ENCODE measurements at regions of chr10 and their contacts with region 1.

Region 1: DNA sequence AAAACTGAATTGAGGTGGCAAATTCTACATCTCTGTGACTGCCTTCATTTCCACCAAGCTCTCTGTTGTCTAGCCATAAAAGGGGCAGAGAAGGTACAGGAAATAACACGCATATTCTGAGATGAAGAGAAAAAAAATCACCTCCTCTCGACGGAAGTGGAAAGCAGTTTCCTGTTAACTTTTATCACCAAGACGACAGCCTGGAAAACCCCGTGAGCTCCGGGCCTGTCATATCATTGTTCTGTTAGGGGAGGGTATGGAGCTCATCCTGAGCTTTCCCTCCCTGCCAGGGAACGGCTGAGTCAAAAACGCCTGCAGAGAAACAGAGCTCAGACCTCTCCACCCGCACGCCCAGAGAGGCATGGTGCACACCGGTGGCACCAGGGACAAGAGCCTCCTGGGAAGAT is 200.3 kb downstream of the PRPF18 start:
- DNase-seq: peak; percentile 17
- H3K4me3 ChIP-seq: no peak overlapping the region
- H3K27ac ChIP-seq: peak overlapping the region in 3 of 4 donors; percentile 55 to 59 (median 57)
- H3K4me1 ChIP-seq: peaks cover 4 to 29% (median 7%) of the 10 kb centered on the region in 4 donors
- H3K27me3 ChIP-seq: no peaks in the 10 kb centered on the region
- CTCF ChIP-seq: no peak
- EP300 ChIP-seq: no peak
- POLR2A ChIP-seq: no peak

Region 2: GRCh38 chr10:13571541-13571940 is 215.5 kb before region 1 on chr10:
- in situ Hi-C with region 1: no loop called
- intact Hi-C with region 1: no loop called
- DNase-seq: no peak
- H3K4me3 ChIP-seq: no peak overlapping the region
- H3K27ac ChIP-seq: no peak overlapping the region
- H3K4me1 ChIP-seq: no peaks in the 10 kb centered on the region
- H3K27me3 ChIP-seq: peaks cover 13% of the 10 kb centered on the region
- CTCF ChIP-seq: no peak
- EP300 ChIP-seq: no peak
- POLR2A ChIP-seq: no peak

Region 3: DNA sequence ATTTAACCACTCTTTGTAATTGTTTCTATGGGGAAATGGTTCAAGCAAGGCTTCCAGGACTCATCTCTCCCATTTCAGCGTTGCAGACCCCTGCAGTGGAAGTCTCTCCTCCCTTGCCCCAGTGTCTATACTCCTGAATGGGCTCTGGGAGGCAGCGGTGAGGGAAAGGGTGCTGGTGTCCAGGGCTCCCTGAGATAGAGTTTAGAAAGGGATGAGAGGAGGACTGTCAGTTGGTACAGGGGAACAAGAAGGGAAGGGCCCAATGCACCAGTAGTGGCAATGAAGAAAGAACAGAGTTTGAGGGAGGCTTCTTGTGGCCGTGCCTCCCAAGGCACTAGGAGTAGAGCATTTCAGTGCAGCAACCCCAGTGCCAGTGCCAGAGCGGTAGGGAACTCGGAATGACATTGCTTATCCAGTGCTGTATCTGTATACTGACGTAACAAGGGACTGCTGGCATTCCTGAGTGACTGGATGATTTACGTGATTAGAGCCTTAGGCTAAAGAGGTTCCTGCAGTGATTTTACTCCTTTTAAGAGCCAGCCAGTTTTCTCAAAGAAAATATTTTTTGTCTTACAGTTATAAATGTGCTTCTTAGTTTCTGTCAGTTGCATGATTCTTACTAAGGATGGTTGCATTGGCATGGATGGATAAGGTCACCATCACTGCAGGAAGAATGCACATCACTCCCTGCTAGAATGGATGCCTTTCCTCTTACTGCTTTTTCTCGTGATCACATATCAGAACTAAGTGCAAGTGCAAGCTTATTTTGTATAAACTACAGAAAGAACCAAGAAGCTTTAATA is 172.3 kb before region 1 on chr10:
- in situ Hi-C with region 1: no loop called
- intact Hi-C with region 1: loop called (anchors 2 kb)
- DNase-seq: no peak
- H3K4me3 ChIP-seq: no peak overlapping the region
- H3K27ac ChIP-seq: peak overlapping the region in 1 of 4 donors; percentile 37
- H3K4me1 ChIP-seq: peaks cover 0 to 6% (median 0%) of the 10 kb centered on the region in 4 donors
- H3K27me3 ChIP-seq: no peaks in the 10 kb centered on the region
- CTCF ChIP-seq: no peak
- EP300 ChIP-seq: no peak
- POLR2A ChIP-seq: no peak

Region 4: DNA sequence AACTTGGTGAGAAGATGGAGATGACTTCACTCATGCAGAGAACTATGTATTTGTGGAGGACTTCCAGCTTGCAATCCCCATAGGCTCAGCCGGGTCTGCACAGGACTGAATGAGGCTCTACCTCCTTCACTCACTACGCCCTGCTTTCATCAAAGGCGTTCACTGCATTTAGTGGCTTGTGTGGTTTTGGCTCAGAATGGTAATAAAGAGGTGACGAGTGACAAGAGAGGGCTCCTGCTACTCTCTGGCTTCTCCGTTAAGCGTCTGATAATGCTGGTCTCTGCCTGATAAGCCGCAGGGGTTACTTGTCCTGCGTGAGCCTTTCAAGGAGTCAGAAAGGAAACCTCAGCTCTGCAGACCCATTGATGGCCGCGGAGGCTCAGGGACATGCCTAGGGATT is 143.1 kb after region 1 on chr10:
- in situ Hi-C with region 1: no loop called
- intact Hi-C with region 1: loop called (anchors 10 kb)
- DNase-seq: no peak
- H3K4me3 ChIP-seq: no peak overlapping the region
- H3K27ac ChIP-seq: no peak overlapping the region
- H3K4me1 ChIP-seq: no peaks in the 10 kb centered on the region
- H3K27me3 ChIP-seq: no peaks in the 10 kb centered on the region
- CTCF ChIP-seq: no peak
- EP300 ChIP-seq: no peak
- POLR2A ChIP-seq: no peak

Region 5: GRCh38 chr10:14093730-14094484 is 306.9 kb after region 1 on chr10:
- in situ Hi-C with region 1: loop called in 1 of 4 experiments (anchors 25 kb)
- intact Hi-C with region 1: loop called (anchors 5 kb)
- DNase-seq: no peak
- H3K4me3 ChIP-seq: no peak overlapping the region
- H3K27ac ChIP-seq: no peak overlapping the region
- H3K4me1 ChIP-seq: no peaks in the 10 kb centered on the region
- H3K27me3 ChIP-seq: no peaks in the 10 kb centered on the region
- CTCF ChIP-seq: peak in 3 of 5 experiments; percentile 10 to 21 (median 20)
- EP300 ChIP-seq: no peak
- POLR2A ChIP-seq: no peak

Region 6: GRCh38 chr10:14185316-14186045 is 398.5 kb after region 1 on chr10:
- in situ Hi-C with region 1: loop called in 1 of 4 experiments (anchors 25 kb)
- intact Hi-C with region 1: no loop called
- DNase-seq: no peak
- H3K4me3 ChIP-seq: no peak overlapping the region
- H3K27ac ChIP-seq: no peak overlapping the region
- H3K4me1 ChIP-seq: no peaks in the 10 kb centered on the region
- H3K27me3 ChIP-seq: peaks cover 29% of the 10 kb centered on the region
- CTCF ChIP-seq: no peak
- EP300 ChIP-seq: no peak
- POLR2A ChIP-seq: peak; percentile 12

Region 7: DNA sequence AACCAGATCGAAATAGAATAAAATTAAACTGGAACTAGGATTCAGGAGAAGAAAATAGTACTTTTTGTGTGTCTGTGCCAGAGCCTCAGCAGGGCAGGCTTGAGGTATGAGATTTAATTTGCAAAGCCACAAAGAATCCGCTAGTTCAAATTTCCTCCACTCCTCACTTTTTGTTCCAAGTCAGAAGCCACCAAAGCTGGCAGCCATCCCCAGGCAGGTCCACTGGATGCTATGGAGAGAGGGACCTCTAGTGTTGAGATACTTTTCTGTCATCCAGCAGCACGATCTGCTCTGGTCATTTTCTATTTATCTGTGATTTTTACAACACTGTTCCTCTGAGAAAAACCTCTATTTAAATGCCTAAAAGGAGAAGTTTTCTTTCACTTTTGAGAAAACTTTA is 691.6 kb after region 1 on chr10:
- in situ Hi-C with region 1: loop called in 1 of 4 experiments (anchors 25 kb)
- intact Hi-C with region 1: no loop called
- DNase-seq: no peak
- H3K4me3 ChIP-seq: no peak overlapping the region
- H3K27ac ChIP-seq: no peak overlapping the region
- H3K4me1 ChIP-seq: no peaks in the 10 kb centered on the region
- H3K27me3 ChIP-seq: peaks cover 5% of the 10 kb centered on the region
- CTCF ChIP-seq: peak in 3 of 5 experiments; percentile 40 to 44 (median 41)
- EP300 ChIP-seq: no peak
- POLR2A ChIP-seq: no peak

Measured in transverse colon (tissue), 4 donors.